Activated CD4-positive, alpha-beta T cell treated with anti-CD3 and anti-CD28 coated beads for 36 hours (primary cell): ENCODE measurements at regions of chr10 and their contacts with region 1.

Region 1: GRCh38 chr10:101818119-101818871 is at the start of gene OGA:
- DNase-seq: peak; percentile 99
- ATAC-seq: peak; percentile 89
- H3K4me3 Mint-ChIP-seq: peak within 1 kb of the TSS; percentile 89
- H3K27ac Mint-ChIP-seq: peak within 1 kb of the TSS; percentile 83
- H3K4me1 Mint-ChIP-seq: peaks cover 40% of the 10 kb centered on the region
- H3K27me3 Mint-ChIP-seq: no peaks in the 10 kb centered on the region
- total RNA-seq, gene OGA: 113 to 124 TPM

Region 2: DNA sequence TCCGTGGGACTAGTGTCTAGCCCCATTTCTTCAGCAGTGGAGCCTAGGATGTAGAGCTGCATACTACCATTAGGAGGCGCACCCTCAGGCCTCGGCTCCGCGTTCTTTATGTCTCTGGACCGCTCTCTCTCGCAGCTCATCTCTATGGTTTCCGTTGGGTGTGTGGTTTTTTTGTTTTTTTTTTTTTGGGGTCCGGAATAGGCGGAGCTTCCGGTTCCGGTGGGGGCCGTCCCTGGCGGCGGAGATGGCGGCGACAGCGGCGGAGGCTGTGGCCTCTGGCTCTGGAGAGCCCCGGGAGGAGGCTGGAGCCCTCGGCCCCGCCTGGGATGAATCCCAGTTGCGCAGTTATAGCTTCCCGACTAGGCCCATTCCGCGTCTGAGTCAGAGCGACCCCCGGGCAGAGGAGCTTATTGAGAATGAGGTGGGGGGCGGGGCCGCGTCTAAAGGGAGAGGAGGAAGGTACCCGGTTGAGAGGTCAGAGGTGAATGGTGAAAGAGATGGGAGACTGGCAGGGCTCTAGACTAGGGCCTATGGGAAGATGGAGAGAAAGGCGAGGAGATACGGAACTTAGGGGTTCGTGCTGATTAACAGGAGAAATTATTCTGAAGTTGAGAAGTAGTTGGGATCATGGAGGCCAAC is 1282.5 kb before region 1 on chr10 and contains the start of gene HIF1AN:
- CTCF ChIA-PET with region 1: no interaction called
- POLR2A ChIA-PET with region 1: no interaction called
- intact Hi-C with region 1: loop called in 1 of 2 experiments (anchors 10 kb)
- DNase-seq: peak; percentile 93
- ATAC-seq: peak; percentile 96
- H3K4me3 Mint-ChIP-seq: no peak within 1 kb of the TSS
- H3K27ac Mint-ChIP-seq: no peak within 1 kb of the TSS
- H3K4me1 Mint-ChIP-seq: peaks cover 27% of the 10 kb centered on the region
- H3K27me3 Mint-ChIP-seq: no peaks in the 10 kb centered on the region
- total RNA-seq, gene HIF1AN: 45.9 to 50.8 TPM

Region 3: GRCh38 chr10:101587725-101588653 is 230.3 kb before region 1 on chr10 and contains the starts of genes DPCD and POLL:
- CTCF ChIA-PET with region 1: no interaction called
- POLR2A ChIA-PET with region 1: no interaction called
- intact Hi-C with region 1: loop called in 1 of 2 experiments (anchors 1 kb)
- DNase-seq: peak; percentile 97
- ATAC-seq: peak; percentile 98
- H3K4me3 Mint-ChIP-seq: peak within 1 kb of the TSS; percentile 86
- H3K27ac Mint-ChIP-seq: peak within 1 kb of the TSS; percentile 81
- H3K4me1 Mint-ChIP-seq: peaks cover 18% of the 10 kb centered on the region
- H3K27me3 Mint-ChIP-seq: no peaks in the 10 kb centered on the region
- total RNA-seq, gene DPCD: 15.5 to 19.3 TPM
- total RNA-seq, gene POLL: 30.2 to 31.4 TPM

Region 4: DNA sequence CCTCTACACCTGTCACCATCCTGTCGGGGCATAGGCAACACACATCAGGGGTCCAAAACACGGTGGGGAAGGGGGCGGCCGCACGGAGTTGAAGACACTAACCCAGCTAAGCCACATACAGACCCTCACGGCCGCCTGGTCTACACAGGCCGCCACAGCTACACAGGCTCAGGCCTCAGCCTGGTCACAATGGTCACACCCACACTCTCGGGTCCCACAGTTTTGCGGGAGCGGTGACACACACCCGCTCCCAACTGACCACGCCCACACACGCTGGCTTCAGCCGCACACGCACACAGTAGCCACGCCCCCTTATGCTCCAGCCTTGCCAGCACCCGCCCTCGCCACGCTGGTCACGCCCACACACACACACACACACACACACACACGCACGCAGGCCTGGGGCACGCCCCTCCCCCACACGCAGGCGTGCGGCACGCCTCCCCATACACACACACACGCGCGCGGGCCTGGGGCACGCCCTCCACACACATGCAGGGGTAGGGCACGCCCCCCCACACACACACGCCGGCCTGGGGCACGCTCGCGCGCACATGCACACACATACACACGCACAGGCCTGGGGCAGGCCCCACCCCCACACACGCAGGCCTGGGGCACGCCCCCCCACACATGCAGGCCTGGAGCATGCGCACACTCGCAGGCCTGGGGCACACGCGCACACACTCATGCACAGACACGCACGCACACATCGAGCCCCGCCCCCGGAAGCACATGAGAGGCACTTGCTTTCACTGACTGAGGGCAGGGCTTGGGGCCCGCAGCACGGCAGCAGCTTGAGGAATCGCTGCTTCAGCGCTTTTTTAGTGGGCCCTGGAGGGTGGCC is 12.2 kb after region 1 on chr10:
- CTCF ChIA-PET with region 1: interaction called, 13 read pairs
- POLR2A ChIA-PET with region 1: interaction called, 16 read pairs
- intact Hi-C with region 1: loop called (anchors 1 kb)
- DNase-seq: peak; percentile 96
- ATAC-seq: peak; percentile 77
- H3K4me3 Mint-ChIP-seq: peak overlapping the region; percentile 70
- H3K27ac Mint-ChIP-seq: peak overlapping the region; percentile 98
- H3K4me1 Mint-ChIP-seq: peaks cover 56% of the 10 kb centered on the region
- H3K27me3 Mint-ChIP-seq: no peaks in the 10 kb centered on the region

Region 5: DNA sequence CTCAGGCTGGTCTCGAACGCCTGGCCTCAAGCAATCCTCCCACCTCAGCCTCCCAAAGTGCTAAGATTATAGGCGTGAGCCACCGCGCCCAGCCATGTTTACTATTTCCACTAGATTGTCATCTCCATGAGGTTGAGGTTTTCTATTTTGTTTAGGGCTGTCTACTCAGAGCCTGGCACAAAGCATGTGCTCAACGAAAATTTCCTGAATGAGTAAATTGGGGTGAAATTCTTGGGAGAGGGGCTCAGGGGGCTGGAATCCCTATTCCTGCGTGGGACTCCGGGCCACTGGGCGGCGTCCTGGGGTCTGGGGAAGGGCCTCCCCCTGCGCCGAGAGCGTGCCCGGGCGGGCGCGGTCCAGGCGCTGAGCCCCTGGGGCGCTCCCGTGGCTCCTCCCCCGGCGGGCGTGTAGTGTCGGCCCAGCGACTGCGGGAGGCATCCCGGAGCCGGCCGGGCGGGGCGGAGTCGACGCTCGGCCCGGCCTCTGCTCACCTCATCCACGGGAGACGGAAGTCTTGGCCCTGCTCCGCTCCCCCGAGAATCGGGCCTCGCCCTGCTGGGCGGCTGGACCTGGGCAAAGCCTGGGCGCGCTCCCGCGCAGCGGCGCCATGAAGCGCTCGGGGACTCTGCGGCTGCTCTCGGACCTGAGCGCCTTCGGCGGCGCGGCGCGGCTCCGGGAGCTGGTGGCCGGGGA is 246.7 kb after region 1 on chr10 and contains the start of gene HPS6:
- CTCF ChIA-PET with region 1: no interaction called
- POLR2A ChIA-PET with region 1: interaction called, 3 read pairs
- intact Hi-C with region 1: loop called (anchors 1 kb)
- DNase-seq: peak; percentile 94
- ATAC-seq: peak; percentile 99
- H3K4me3 Mint-ChIP-seq: peak within 1 kb of the TSS; percentile 79
- H3K27ac Mint-ChIP-seq: peak within 1 kb of the TSS; percentile 88
- H3K4me1 Mint-ChIP-seq: peaks cover 22% of the 10 kb centered on the region
- H3K27me3 Mint-ChIP-seq: no peaks in the 10 kb centered on the region
- total RNA-seq, gene HPS6: 12.9 to 18.9 TPM

Region 6: GRCh38 chr10:102245101-102245931 is 427.0 kb after region 1 on chr10 and contains the start of gene GBF1:
- CTCF ChIA-PET with region 1: no interaction called
- POLR2A ChIA-PET with region 1: no interaction called
- intact Hi-C with region 1: loop called in 1 of 2 experiments (anchors 2 kb)
- DNase-seq: peak; percentile 94
- ATAC-seq: peak; percentile 90
- H3K4me3 Mint-ChIP-seq: peak within 1 kb of the TSS; percentile 98
- H3K27ac Mint-ChIP-seq: peak within 1 kb of the TSS; percentile 81
- H3K4me1 Mint-ChIP-seq: peaks cover 44% of the 10 kb centered on the region
- H3K27me3 Mint-ChIP-seq: peaks cover 18% of the 10 kb centered on the region
- total RNA-seq, gene GBF1: 33.1 to 37.5 TPM